Common myeloid progenitor, CD34-positive (primary cell): ENCODE measurements at regions of chr17 and their contacts with region 1.

Region 1: DNA sequence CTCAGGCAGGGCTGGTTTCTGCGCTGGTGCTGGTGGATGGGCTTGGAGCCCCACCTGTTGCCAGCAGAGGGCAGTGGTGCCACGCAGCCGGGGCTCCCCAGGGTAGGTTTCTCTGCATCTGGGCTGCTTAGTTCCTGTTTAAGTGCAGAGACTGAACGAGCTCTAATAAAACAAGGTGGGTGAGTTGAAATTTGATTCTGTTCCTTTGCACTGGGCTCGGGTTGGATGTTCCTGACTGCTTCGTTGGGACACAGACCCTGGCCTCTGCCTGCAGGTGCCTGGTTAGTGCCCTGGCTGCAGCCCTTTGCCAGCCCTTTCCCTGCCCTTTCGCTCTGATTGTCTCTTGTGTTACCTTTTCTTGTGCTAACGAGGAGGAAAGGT is 30.0 kb downstream of the TBCD start:
- DNase-seq: peak; percentile 74 to 90 (median 87)
- H3K4me3 ChIP-seq: no peak overlapping the region
- H3K27ac ChIP-seq: no peak overlapping the region
- H3K4me1 ChIP-seq: peaks cover 0 to 9% (median 4%) of the 10 kb centered on the region in 4 experiments
- H3K27me3 ChIP-seq: no peaks in the 10 kb centered on the region

Region 2: GRCh38 chr17:82668631-82669099 is 113.2 kb before region 1 on chr17:
- CTCF ChIA-PET with region 1: interaction called, 12 read pairs
- POLR2A ChIA-PET with region 1: no interaction called
- DNase-seq: peak; percentile 84 to 88 (median 87)
- H3K4me3 ChIP-seq: peak overlapping the region in 6 of 7 experiments; percentile 23 to 67 (median 48)
- H3K27ac ChIP-seq: no peak overlapping the region
- H3K4me1 ChIP-seq: peaks cover 0 to 19% (median 6%) of the 10 kb centered on the region in 4 experiments
- H3K27me3 ChIP-seq: no peaks in the 10 kb centered on the region

Region 3: GRCh38 chr17:82767041-82767754 is 14.7 kb before region 1 on chr17:
- CTCF ChIA-PET with region 1: interaction called, 13 read pairs
- POLR2A ChIA-PET with region 1: no interaction called
- DNase-seq: peak; percentile 58 to 74 (median 70)
- H3K4me3 ChIP-seq: no peak overlapping the region
- H3K27ac ChIP-seq: no peak overlapping the region
- H3K4me1 ChIP-seq: no peaks in the 10 kb centered on the region
- H3K27me3 ChIP-seq: no peaks in the 10 kb centered on the region

Region 4: GRCh38 chr17:82876602-82877379 is 94.9 kb after region 1 on chr17:
- CTCF ChIA-PET with region 1: interaction called, 12 read pairs
- POLR2A ChIA-PET with region 1: no interaction called
- DNase-seq: peak; percentile 30 to 66 (median 58)
- H3K4me3 ChIP-seq: no peak overlapping the region
- H3K27ac ChIP-seq: no peak overlapping the region
- H3K4me1 ChIP-seq: peaks cover 8 to 44% (median 34%) of the 10 kb centered on the region in 4 experiments
- H3K27me3 ChIP-seq: peaks cover 0 to 5% (median 0%) of the 10 kb centered on the region in 5 experiments

Region 5: GRCh38 chr17:82917691-82918345 is 135.9 kb after region 1 on chr17:
- CTCF ChIA-PET with region 1: interaction called, 33 read pairs
- POLR2A ChIA-PET with region 1: no interaction called
- DNase-seq: peak; percentile 14 to 43 (median 40)
- H3K4me3 ChIP-seq: no peak overlapping the region
- H3K27ac ChIP-seq: no peak overlapping the region
- H3K4me1 ChIP-seq: peaks cover 0 to under 1% (median 0%) of the 10 kb centered on the region in 4 experiments
- H3K27me3 ChIP-seq: no peaks in the 10 kb centered on the region